Tibial artery (tissue), 4 donors: ENCODE measurements at regions of chr14 and their contacts with region 1.

Region 1: DNA sequence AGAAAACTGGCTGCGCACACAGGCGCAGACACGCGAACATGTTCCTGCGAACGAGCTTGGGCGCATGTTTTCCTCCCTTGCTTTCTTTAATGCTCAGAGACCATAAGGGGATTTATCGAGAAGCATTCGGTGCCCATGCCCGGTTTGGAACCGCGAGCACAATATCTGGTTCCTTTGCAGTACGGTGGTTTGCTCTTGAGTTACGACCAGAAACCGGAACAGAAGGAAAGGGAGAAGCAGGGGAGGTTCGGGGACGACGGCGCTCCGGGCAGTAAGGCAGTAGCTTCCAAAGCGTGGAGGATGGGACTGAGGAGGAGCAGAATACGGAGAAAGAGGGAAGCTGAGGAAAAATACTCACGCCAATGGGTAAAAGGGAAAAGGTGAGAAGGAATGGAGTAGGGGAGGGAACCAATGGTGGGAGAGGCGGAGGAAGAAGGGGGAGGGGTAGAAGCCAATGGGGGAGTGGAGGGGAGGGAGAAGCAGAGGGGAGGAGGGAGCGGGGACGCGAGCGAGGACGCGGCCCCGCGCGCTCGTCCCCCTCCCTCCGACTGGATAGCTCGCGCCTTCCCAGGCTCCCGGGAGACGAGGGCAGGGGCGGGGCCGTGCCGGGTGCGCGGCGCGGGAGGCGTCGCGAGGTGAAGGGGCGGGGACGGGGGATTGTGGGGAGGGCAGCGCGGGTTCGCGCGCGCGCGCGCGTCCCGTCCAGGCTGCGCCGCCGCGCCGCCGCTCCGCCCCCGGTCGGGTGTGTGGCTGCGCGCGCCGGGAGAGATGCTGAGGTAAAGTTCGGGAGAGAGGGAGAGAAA is 625 bp upstream of the ARHGAP5 start:
- DNase-seq: peak; percentile 94 to 99
- H3K4me3 ChIP-seq: peak overlapping the region; percentile 92 to 99
- H3K27ac ChIP-seq: peak overlapping the region; percentile 99 to 100
- H3K4me1 ChIP-seq: peaks cover 0 to 63% (median 15%) of the 10 kb centered on the region in 4 donors
- H3K27me3 ChIP-seq: no peaks in the 10 kb centered on the region
- CTCF ChIP-seq: no peak

Region 2: GRCh38 chr14:32121948-32122347 is 45.5 kb after region 1 on chr14:
- intact Hi-C with region 1: no loop called
- DNase-seq: no peak
- H3K4me3 ChIP-seq: no peak overlapping the region
- H3K27ac ChIP-seq: no peak overlapping the region
- H3K4me1 ChIP-seq: peaks cover 0 to 25% (median 9%) of the 10 kb centered on the region in 4 donors
- H3K27me3 ChIP-seq: no peaks in the 10 kb centered on the region
- CTCF ChIP-seq: no peak

Region 3: GRCh38 chr14:32202998-32203882 is 126.8 kb after region 1 on chr14 and contains the start of gene RNU6-8:
- intact Hi-C with region 1: loop called (anchors 2 kb)
- DNase-seq: peak; percentile 69 to 91
- H3K4me3 ChIP-seq: peak within 1 kb of the TSS; percentile 73 to 83
- H3K27ac ChIP-seq: peak within 1 kb of the TSS; percentile 86 to 89
- H3K4me1 ChIP-seq: peaks cover 0 to 18% (median 3%) of the 10 kb centered on the region in 4 donors
- H3K27me3 ChIP-seq: no peaks in the 10 kb centered on the region
- CTCF ChIP-seq: no peak

Region 4: DNA sequence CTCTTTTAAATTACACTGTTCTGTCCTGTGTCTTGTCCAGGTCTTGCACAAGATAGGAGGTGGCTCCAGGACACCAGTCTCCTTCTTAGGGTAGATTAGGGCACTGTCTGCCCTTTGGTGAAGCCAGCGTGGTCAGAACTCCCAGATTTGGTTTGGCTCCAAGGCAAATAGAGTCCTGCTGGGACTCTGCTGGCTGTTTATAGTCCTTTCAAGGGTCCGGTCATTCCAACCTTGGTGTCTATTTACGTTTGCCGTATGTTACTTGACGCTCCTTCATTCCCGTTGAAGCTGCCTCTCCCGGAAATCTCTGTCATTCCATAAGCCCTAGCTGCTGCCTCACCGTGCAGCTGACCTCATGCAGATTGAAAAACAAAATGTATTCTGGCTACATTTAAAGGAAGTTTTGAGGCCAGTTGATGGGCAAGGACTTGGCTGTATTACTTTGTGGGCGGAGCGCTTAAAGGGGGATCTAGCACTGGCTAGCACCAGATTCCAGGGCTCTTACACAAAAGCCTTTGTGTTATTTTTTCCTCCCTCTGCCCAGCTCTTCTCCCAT is 433.2 kb after region 1 on chr14:
- intact Hi-C with region 1: loop called (anchors 5 kb)
- DNase-seq: peak; percentile 74 to 89
- H3K4me3 ChIP-seq: peak overlapping the region; percentile 24 to 32
- H3K27ac ChIP-seq: peak overlapping the region; percentile 77 to 79
- H3K4me1 ChIP-seq: peaks cover 0 to 72% (median 24%) of the 10 kb centered on the region in 4 donors
- H3K27me3 ChIP-seq: no peaks in the 10 kb centered on the region
- CTCF ChIP-seq: no peak